Activated CD8-positive, alpha-beta T cell treated with anti-CD3 and anti-CD28 coated beads, Interleukin-2, amount 10 ng/mL, durations not matched to agents 7 days and 5 days (primary cell): ENCODE measurements at regions of chr11 and their contacts with region 1.

Region 1: GRCh38 chr11:65506770-65507505 is 8.1 kb downstream of the MALAT1 start:
- DNase-seq: peak; percentile 64
- ATAC-seq: peak; percentile 44
- H3K4me3 Mint-ChIP-seq: no peak overlapping the region
- H3K27ac Mint-ChIP-seq: peak overlapping the region; percentile 73
- H3K4me1 Mint-ChIP-seq: peaks cover 50% of the 10 kb centered on the region
- H3K27me3 Mint-ChIP-seq: no peaks in the 10 kb centered on the region

Region 2: DNA sequence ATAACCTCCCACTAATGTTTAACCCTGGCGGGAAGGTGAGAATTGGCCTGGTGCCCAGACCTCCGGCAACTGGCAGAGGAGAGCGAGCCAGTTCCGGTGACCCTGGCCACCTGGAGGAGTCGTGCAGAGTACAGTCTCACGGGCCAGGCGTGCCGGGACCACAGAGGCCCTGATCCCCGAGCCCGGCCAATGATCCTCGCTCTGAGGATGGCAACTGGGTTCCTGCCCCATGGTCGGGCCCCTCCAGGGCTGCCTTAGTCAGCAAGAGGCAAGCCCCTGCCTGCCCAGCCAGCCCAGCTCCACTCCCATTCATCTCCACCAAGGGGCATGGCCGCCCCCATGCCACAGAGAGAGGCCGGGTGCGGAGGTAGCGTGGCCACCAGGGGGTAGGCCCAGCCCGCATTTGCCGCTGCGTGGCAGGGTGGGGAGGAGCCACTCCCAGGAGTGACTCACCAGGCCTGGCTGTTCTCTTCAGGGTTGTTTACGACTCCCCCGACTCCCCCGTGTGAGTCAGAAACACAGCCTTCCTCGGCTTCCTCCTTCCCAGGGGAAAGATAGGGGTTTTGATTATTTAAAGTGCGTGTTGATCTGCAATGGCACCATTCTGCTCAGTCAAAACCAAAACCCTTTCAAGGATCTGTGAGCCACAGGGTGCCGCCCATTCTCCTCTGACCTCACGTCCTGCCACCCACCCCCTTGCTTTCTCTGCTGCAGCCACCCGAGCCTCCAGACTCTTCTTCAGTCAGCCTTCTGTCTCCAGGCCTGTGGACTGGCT is 124.7 kb before region 1 on chr11 and contains the start of gene SLC25A45:
- CTCF ChIA-PET with region 1: interaction called, 17 read pairs
- POLR2A ChIA-PET with region 1: interaction called, 52 read pairs
- DNase-seq: peak; percentile 92
- ATAC-seq: peak; percentile 87
- H3K4me3 Mint-ChIP-seq: peak within 1 kb of the TSS; percentile 83
- H3K27ac Mint-ChIP-seq: peak within 1 kb of the TSS; percentile 99
- H3K4me1 Mint-ChIP-seq: peaks cover 47% of the 10 kb centered on the region
- H3K27me3 Mint-ChIP-seq: no peaks in the 10 kb centered on the region
- total RNA-seq, gene SLC25A45: 24.5 to 28.2 TPM

Region 3: DNA sequence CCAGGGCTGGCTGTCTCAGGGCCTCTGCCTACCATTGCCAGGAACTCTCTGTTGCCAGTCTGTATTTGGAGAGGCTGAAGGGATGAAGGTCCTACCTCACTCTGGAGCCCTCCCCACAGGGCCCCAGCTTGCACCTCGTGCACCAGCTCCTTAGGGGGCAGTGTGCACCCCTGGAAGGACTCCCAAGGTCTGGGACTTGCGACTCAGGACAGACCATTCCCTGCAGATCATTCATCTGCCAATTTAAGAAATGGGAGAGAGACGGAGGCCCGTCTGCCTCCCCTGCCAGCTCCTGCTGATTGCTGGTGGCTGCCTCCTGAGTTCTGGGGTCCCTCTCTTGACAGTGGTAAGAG is 35.6 kb before region 1 on chr11:
- CTCF ChIA-PET with region 1: interaction called, 113 read pairs
- POLR2A ChIA-PET with region 1: interaction called, 794 read pairs
- DNase-seq: no peak
- ATAC-seq: no peak
- H3K4me3 Mint-ChIP-seq: peak overlapping the region; percentile 12
- H3K27ac Mint-ChIP-seq: peak overlapping the region; percentile 94
- H3K4me1 Mint-ChIP-seq: peaks cover 31% of the 10 kb centered on the region
- H3K27me3 Mint-ChIP-seq: no peaks in the 10 kb centered on the region

Region 4: GRCh38 chr11:65524741-65525545 is 18.0 kb after region 1 on chr11 and contains the start of gene SCYL1:
- CTCF ChIA-PET with region 1: interaction called, 4 read pairs
- POLR2A ChIA-PET with region 1: interaction called, 25 read pairs
- DNase-seq: peak; percentile 84
- ATAC-seq: peak; percentile 79
- H3K4me3 Mint-ChIP-seq: peak within 1 kb of the TSS; percentile 83
- H3K27ac Mint-ChIP-seq: peak within 1 kb of the TSS; percentile 89
- H3K4me1 Mint-ChIP-seq: peaks cover 62% of the 10 kb centered on the region
- H3K27me3 Mint-ChIP-seq: no peaks in the 10 kb centered on the region
- total RNA-seq, gene SCYL1: 68.0 to 69.5 TPM